Activated naive CD4-positive, alpha-beta T cell treated with anti-CD3 and anti-CD28 coated beads for 36 hours (primary cell): ENCODE measurements at regions of chr22 and their contacts with region 1.

Region 1: DNA sequence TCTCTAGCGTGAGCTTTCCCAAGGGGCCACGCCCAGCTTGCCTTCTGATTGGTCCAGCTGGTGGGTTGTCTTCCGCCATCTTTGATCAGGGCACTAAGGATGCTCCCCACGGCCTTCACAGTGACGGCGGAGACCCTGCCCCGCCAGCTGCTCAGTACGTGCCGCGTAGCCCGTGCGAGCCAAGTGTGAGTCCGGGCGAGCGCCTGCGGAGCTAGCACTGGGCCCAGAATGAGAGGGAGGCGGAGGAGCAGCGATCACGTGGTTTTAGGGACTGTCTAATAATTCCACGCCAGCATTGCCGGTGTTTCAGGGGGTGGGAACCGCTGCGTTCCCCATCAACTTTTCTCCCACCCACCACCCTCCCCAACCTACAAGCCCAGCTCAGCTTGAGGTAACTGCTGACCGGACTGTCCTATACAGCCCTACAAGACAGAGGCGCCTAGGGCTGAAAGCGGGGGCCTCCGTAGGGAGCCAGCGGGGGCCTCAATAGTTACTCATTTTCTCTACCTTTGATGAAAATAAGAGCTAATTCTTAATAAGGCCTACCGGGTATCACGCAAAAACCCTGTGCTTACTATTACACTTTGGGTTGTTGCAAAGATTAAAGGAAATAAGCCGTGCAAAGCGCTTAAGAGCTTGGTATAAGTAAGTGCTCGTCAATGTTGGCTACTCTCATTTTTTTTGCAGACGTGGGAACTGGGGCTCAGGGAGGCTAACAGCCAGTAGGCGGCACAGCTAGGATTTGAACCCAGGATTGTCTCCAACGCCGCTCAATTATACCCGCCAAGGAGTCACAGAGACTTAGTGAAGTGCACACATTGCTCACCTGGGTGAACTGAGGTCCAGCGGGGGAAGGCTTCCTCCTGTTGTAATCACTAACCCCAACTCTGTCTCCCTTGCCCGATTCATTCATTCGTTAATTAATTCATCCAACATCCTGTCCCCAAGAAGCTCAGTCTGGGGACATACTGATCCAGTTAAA is 1.3 kb upstream of the MTFP1 start:
- DNase-seq: peak; percentile 99
- H3K4me3 Mint-ChIP-seq: peak overlapping the region; percentile 97
- H3K27ac Mint-ChIP-seq: peak overlapping the region; percentile 96
- H3K4me1 Mint-ChIP-seq: peaks cover 50% of the 10 kb centered on the region
- H3K27me3 Mint-ChIP-seq: no peaks in the 10 kb centered on the region

Region 2: GRCh38 chr22:30262917-30263741 is 161.1 kb before region 1 on chr22:
- CTCF ChIA-PET with region 1: no interaction called
- intact Hi-C with region 1: no loop called
- DNase-seq: peak; percentile 87
- H3K4me3 Mint-ChIP-seq: peak overlapping the region; percentile 65
- H3K27ac Mint-ChIP-seq: peak overlapping the region; percentile 43
- H3K4me1 Mint-ChIP-seq: peaks cover 39% of the 10 kb centered on the region
- H3K27me3 Mint-ChIP-seq: no peaks in the 10 kb centered on the region

Region 3: GRCh38 chr22:30356449-30357235 is 67.6 kb before region 1 on chr22 and contains the starts of genes CCDC157 and SF3A1:
- CTCF ChIA-PET with region 1: interaction called, 3 read pairs
- intact Hi-C with region 1: loop called (anchors 2 kb)
- DNase-seq: peak; percentile 87
- H3K4me3 Mint-ChIP-seq: peak within 1 kb of the TSS; percentile 92
- H3K27ac Mint-ChIP-seq: peak within 1 kb of the TSS; percentile 84
- H3K4me1 Mint-ChIP-seq: peaks cover 50% of the 10 kb centered on the region
- H3K27me3 Mint-ChIP-seq: no peaks in the 10 kb centered on the region
- total RNA-seq, gene CCDC157: 1.1 to 1.5 TPM
- total RNA-seq, gene SF3A1: 274 to 276 TPM

Region 4: DNA sequence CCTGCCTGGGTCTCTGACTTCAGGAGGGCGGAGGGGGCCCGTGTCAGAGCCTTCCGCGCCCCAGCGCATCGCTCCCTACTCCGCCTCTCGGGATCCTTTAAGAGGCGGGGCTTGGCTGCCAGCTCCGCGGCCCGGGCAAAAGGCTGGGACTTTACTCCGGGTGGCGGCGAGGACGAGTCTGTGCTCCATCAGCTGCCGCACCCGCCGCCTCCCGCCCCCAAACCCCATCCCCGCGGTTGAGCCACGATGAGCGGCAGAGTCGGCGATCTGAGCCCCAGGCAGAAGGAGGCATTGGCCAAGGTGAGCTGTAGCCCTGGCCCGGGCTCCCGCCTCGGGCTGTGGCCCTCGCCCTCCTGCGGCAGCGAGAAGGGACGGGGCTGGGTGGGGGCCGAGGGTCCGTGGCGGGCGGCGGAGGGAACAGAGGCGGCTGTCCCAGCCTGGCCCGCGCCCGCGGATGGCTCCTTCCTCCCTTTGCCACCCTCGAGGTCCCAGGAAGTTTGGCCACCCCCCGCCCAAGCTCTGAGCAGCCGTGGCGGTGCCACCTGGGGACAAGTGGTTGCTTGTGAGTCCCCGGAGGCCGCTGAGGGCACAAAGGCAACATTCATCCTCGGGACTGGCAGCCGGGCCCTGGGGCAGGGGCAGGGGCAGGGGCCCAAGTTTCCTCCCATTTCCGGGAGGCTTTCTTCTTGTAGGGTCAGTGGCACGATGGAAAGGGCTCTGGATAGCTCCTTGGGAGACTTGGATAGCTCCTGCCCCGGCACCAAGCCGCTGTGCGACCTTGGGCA is 27.2 kb before region 1 on chr22 and contains the start of gene SEC14L2:
- CTCF ChIA-PET with region 1: interaction called, 66 read pairs
- intact Hi-C with region 1: loop called (anchors 1 kb)
- DNase-seq: peak; percentile 73
- H3K4me3 Mint-ChIP-seq: peak within 1 kb of the TSS; percentile 87
- H3K27ac Mint-ChIP-seq: no peak within 1 kb of the TSS
- H3K4me1 Mint-ChIP-seq: peaks cover 43% of the 10 kb centered on the region
- H3K27me3 Mint-ChIP-seq: no peaks in the 10 kb centered on the region
- total RNA-seq, gene SEC14L2: 8.2 to 8.8 TPM

Region 5: DNA sequence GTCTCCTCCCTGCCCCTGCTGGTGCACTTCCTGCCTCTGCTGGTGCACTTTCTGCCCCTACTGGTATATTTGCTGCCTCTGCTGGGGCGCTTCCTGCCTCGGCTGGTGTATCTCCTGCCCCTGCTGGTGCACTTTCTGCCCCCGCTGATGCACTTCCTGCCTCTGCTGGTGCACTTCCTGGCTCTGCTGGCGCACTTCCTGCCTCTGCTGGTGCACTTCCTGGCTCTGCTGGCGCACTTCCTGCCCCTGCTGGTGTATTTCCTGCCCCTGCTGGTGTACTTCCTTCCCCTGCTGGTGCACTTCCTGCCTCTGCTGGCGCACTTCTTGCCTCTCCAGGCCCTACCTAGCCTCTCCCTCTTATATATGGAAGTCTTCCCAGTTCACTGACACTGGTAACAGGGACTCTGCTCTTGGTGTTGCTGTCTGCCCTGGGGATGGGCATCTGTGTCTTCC is 11.4 kb after region 1 on chr22:
- CTCF ChIA-PET with region 1: interaction called, 16 read pairs
- intact Hi-C with region 1: loop called (anchors 1 kb)
- DNase-seq: peak; percentile 90
- H3K4me3 Mint-ChIP-seq: peak overlapping the region; percentile 84
- H3K27ac Mint-ChIP-seq: peak overlapping the region; percentile 95
- H3K4me1 Mint-ChIP-seq: peaks cover 22% of the 10 kb centered on the region
- H3K27me3 Mint-ChIP-seq: peaks cover 12% of the 10 kb centered on the region